ENCODE measurements at regions of chr12 and their contacts with region 1.

Region 1: GRCh38 chr12:120292661-120293531 is at the start of gene RNU4-1:
- DNase-seq: peak; percentile 57
- ATAC-seq: peak; percentile 60
- H3K4me3 Mint-ChIP-seq: peak within 1 kb of the TSS; percentile 15
- H3K27ac Mint-ChIP-seq: no peak within 1 kb of the TSS
- H3K4me1 Mint-ChIP-seq: peaks cover 13% of the 10 kb centered on the region
- H3K27me3 Mint-ChIP-seq: no peaks in the 10 kb centered on the region
- CTCF ChIP-seq: no peak
- total RNA-seq, gene RNU4-1: 3,997 and 4,399 TPM in 2 replicates

Region 2: DNA sequence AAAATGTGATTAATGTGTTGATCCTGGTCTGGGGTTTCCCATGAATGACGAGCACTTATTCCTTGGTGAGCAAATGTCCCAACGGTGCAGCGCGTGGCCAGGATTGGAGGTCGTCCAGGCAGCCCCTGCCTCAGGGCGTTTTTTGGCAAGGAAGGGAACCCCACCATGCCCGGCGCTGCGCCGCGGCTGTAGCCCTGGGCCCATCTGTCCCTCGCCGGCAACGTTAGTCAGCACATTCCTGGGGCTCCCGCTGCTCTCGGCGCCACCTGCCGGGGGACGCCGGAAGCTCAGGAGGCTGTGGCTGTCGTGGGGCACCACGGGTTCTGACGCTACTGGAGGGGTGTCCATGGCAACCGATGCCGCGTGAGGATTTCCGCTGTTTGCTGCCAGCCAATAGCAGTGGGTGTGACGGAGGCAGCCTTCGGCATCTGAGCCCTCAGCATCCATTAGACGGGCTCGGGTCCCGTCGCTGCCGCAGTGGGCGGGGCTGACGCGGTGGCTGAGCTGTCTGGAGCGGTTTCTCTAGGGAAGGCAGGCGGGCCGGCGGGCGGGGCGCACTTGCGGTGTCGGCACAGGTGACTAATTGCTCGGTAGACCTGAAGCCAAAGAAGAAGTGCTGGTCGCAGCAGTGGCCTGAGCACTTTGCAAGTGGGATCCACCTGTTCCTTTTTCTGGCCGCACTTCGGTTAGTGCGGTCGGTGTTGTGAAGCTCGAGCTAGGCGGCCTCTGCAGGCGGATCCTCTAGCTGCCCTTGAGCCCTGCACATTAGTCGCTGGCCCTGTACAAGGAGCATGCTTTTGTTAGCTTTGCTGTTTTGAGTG is 205.9 kb before region 1 on chr12:
- CTCF ChIA-PET with region 1: no interaction called
- POLR2A ChIA-PET with region 1: interaction called, 20 read pairs
- intact Hi-C with region 1: no loop called
- DNase-seq: peak; percentile 98
- ATAC-seq: peak; percentile 93
- H3K4me3 Mint-ChIP-seq: peak overlapping the region; percentile 76
- H3K27ac Mint-ChIP-seq: peak overlapping the region; percentile 81
- H3K4me1 Mint-ChIP-seq: peaks cover 11% of the 10 kb centered on the region
- H3K27me3 Mint-ChIP-seq: no peaks in the 10 kb centered on the region
- CTCF ChIP-seq: peak; percentile 74

Region 3: GRCh38 chr12:120228291-120229070 is 64.4 kb before region 1 on chr12:
- CTCF ChIA-PET with region 1: interaction called, 26 read pairs
- POLR2A ChIA-PET with region 1: interaction called, 202 read pairs
- intact Hi-C with region 1: loop called (anchors 1 kb)
- DNase-seq: peak; percentile 74
- ATAC-seq: peak; percentile 93
- H3K4me3 Mint-ChIP-seq: no peak overlapping the region
- H3K27ac Mint-ChIP-seq: no peak overlapping the region
- H3K4me1 Mint-ChIP-seq: peaks cover 44% of the 10 kb centered on the region
- H3K27me3 Mint-ChIP-seq: peaks cover 25% of the 10 kb centered on the region
- CTCF ChIP-seq: peak; percentile 39

Region 4: GRCh38 chr12:120265473-120266179 is 27.3 kb before region 1 on chr12 and contains the start of gene PXN:
- CTCF ChIA-PET with region 1: interaction called, 5 read pairs
- POLR2A ChIA-PET with region 1: interaction called, 94 read pairs
- intact Hi-C with region 1: no loop called
- DNase-seq: peak; percentile 87
- ATAC-seq: peak; percentile 95
- H3K4me3 Mint-ChIP-seq: peak within 1 kb of the TSS; percentile 86
- H3K27ac Mint-ChIP-seq: peak within 1 kb of the TSS; percentile 59
- H3K4me1 Mint-ChIP-seq: peaks cover 18% of the 10 kb centered on the region
- H3K27me3 Mint-ChIP-seq: peaks cover 20% of the 10 kb centered on the region
- CTCF ChIP-seq: no peak
- total RNA-seq, gene PXN: 1.7 and 2.9 TPM in 2 replicates

Region 5: GRCh38 chr12:120469450-120470149 is 176.7 kb after region 1 on chr12 and contains the start of gene SRSF9:
- CTCF ChIA-PET with region 1: no interaction called
- POLR2A ChIA-PET with region 1: interaction called, 39 read pairs
- intact Hi-C with region 1: no loop called
- DNase-seq: peak; percentile 99
- ATAC-seq: peak; percentile 88
- H3K4me3 Mint-ChIP-seq: peak within 1 kb of the TSS; percentile 90
- H3K27ac Mint-ChIP-seq: peak within 1 kb of the TSS; percentile 86
- H3K4me1 Mint-ChIP-seq: peaks cover 33% of the 10 kb centered on the region
- H3K27me3 Mint-ChIP-seq: no peaks in the 10 kb centered on the region
- CTCF ChIP-seq: no peak
- total RNA-seq, gene SRSF9: 191 and 192 TPM in 2 replicates

Region 6: GRCh38 chr12:120534203-120534702 is 241.4 kb after region 1 on chr12 and contains the start of gene RNF10:
- CTCF ChIA-PET with region 1: no interaction called
- POLR2A ChIA-PET with region 1: interaction called, 10 read pairs
- intact Hi-C with region 1: no loop called
- DNase-seq: peak; percentile 66
- ATAC-seq: peak; percentile 68
- H3K4me3 Mint-ChIP-seq: peak within 1 kb of the TSS; percentile 93
- H3K27ac Mint-ChIP-seq: peak within 1 kb of the TSS; percentile 91
- H3K4me1 Mint-ChIP-seq: peaks cover 60% of the 10 kb centered on the region
- H3K27me3 Mint-ChIP-seq: no peaks in the 10 kb centered on the region
- CTCF ChIP-seq: no peak
- total RNA-seq, gene RNF10: 180 and 200 TPM in 2 replicates

Measured in activated B cell treated with CpG ODN at 0.5 μM for 24 hours (primary cell).